ENCODE measurements at regions of chr6 and their contacts with region 1.

Region 1: GRCh38 chr6:47009566-47009965 is 32.6 kb downstream of the ADGRF1 start:
- DNase-seq: no peak
- ATAC-seq: no peak; the same call in 2 of the 3 replicates
- H3K4me3 ChIP-seq: no peak overlapping the region
- H3K27ac ChIP-seq: no peak overlapping the region
- H3K4me1 ChIP-seq: no peaks in the 10 kb centered on the region
- H3K27me3 ChIP-seq: peaks cover 0 to 28% of the 10 kb centered on the region in 2 experiments; a peak in 3 of 5 replicates
- CTCF ChIP-seq: peak; percentile 56
- EP300 ChIP-seq: no peak
- POLR2A ChIP-seq: no peak
- RAD21 ChIP-seq: no peak

Region 2: DNA sequence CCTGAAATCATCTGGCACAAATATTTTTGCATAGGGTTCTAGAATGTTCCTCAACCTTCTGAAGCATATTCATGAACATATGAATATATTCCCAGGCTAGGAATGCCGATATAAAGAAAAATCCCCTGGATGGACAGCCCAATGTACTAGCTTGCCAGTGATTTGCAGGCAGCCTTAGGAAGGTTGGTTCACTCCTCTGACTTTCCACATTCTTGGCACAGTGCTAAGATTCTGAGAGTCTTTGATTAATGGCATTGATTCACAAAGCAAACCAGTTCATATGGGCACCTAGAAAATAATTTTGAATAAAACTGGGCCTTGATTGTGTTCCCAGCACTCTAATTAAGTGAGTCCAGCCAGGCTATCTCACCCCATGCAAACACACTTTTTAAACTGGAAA is 936.7 kb before region 1 on chr6:
- CTCF ChIA-PET with region 1: no interaction called
- POLR2A ChIA-PET with region 1: no interaction called
- in situ Hi-C with region 1: no loop called
- intact Hi-C with region 1: no loop called
- DNase-seq: no peak
- ATAC-seq: no peak
- H3K4me3 ChIP-seq: no peak overlapping the region
- H3K27ac ChIP-seq: no peak overlapping the region
- H3K4me1 ChIP-seq: no peaks in the 10 kb centered on the region
- H3K27me3 ChIP-seq: no peaks in the 10 kb centered on the region
- CTCF ChIP-seq: no peak
- EP300 ChIP-seq: no peak
- POLR2A ChIP-seq: no peak
- RAD21 ChIP-seq: no peak

Region 3: GRCh38 chr6:47221565-47221964 is 212.0 kb after region 1 on chr6:
- CTCF ChIA-PET with region 1: no interaction called
- POLR2A ChIA-PET with region 1: no interaction called
- in situ Hi-C with region 1: no loop called
- intact Hi-C with region 1: loop called (anchors 10 kb)
- DNase-seq: no peak
- ATAC-seq: no peak; the same call in 2 of the 3 replicates
- H3K4me3 ChIP-seq: no peak overlapping the region
- H3K27ac ChIP-seq: no peak overlapping the region
- H3K4me1 ChIP-seq: no peaks in the 10 kb centered on the region
- H3K27me3 ChIP-seq: no peaks in the 10 kb centered on the region
- CTCF ChIP-seq: no peak
- EP300 ChIP-seq: no peak
- POLR2A ChIP-seq: no peak
- RAD21 ChIP-seq: no peak

Measured in HepG2 (cell line).